ENCODE measurements at regions of chr7 and their contacts with region 1.

Region 1: DNA sequence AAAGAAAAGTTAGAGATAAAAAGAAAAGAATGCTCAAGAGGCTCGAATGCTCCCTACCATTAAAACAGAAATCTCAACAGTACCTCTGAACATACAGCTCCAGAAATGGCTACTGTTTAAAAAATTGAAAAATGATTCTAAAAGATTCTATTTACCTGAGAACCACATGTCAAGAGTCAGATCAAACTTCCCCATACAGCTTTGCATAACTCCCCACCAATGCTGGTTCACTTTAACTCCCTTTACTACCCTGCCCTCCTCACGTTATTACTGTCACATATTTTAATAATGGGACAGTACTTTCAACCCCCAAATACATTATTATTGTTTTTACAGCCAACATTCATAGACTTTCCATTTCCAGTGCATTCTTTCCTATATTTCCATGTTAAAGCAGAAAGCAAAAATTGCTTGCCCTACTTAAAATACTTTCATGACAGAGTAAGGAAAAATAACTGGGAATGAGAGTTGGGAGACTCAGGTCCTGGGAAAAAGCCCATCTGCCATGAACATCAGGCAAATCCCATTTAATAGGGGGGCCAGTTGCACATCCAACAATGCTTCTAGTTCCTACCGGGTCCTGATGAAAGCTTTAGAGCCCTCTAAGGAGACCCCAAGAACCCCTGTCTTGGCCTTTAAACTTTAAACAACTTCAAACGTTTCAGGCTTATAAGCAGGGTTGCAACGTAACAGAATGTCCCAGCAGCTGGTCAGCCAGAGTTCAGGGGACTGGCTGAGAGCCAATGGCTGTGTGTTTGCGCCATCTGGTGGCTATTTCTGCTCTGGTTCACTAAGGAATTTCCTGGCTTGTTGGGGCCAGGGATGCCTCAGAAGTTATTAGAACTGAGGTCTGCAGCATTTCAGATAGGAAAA is 247.4 kb downstream of the ELMO1 start:
- DNase-seq: peak; percentile 49
- H3K4me3 ChIP-seq: no peak overlapping the region
- H3K27ac ChIP-seq: no peak overlapping the region
- H3K4me1 ChIP-seq: no peaks in the 10 kb centered on the region
- H3K27me3 ChIP-seq: no peaks in the 10 kb centered on the region
- CTCF ChIP-seq: peak; percentile 83

Region 2: DNA sequence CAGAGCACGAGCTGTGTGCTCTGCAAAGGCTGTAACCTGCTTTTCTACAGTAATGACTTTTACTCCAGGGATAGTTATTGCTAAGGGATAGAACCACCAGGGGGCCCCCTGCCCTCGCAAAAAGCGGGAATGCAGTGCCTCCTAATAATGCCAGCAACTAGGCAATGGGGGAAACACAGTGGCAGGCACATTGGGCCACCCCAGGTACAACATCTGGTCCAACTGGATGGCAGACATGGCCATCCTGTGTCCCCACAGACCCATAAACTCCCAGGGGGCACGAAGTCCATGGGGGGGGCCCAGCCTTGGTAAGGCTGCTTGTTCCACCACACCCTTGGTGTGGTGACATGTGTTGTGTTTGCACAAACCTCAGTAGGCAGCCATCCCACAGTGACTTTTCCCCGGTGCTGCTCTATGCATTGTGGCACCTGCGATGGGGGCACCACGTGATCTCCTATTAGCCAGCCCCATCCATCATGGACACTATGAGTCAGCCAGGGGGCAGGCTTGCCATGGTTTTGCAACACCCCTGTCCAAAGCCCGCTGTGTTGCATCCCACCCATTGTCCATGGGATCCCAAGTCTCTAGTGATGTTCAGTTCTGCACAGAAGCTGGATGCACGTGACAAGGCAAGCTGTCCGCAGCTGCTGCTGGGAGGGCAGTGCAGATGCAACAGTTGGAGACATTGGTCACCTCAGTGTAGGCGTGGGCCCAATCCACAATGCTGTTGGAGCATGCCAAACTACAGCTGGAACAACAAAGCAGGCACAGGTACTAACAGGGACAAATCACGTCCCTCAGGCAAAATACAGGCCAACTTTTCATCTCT is 727.6 kb before region 1 on chr7:
- CTCF ChIA-PET with region 1: interaction called, 3 read pairs
- POLR2A ChIA-PET with region 1: no interaction called
- intact Hi-C with region 1: loop called (anchors 2 kb)
- DNase-seq: peak; percentile 57
- H3K4me3 ChIP-seq: no peak overlapping the region
- H3K27ac ChIP-seq: no peak overlapping the region
- H3K4me1 ChIP-seq: no peaks in the 10 kb centered on the region
- H3K27me3 ChIP-seq: no peaks in the 10 kb centered on the region
- CTCF ChIP-seq: peak; percentile 78

Region 3: GRCh38 chr7:36670585-36671431 is 530.4 kb before region 1 on chr7:
- CTCF ChIA-PET with region 1: no interaction called
- POLR2A ChIA-PET with region 1: no interaction called
- intact Hi-C with region 1: loop called (anchors 5 kb)
- DNase-seq: peak; percentile 68
- H3K4me3 ChIP-seq: no peak overlapping the region
- H3K27ac ChIP-seq: no peak overlapping the region
- H3K4me1 ChIP-seq: no peaks in the 10 kb centered on the region
- H3K27me3 ChIP-seq: peaks cover 6% of the 10 kb centered on the region
- CTCF ChIP-seq: peak; percentile 87

Region 4: GRCh38 chr7:36967387-36967786 is 233.9 kb before region 1 on chr7:
- CTCF ChIA-PET with region 1: interaction called, 13 read pairs
- POLR2A ChIA-PET with region 1: no interaction called
- intact Hi-C with region 1: loop called (anchors 5 kb)
- DNase-seq: peak; percentile 48
- H3K4me3 ChIP-seq: no peak overlapping the region
- H3K27ac ChIP-seq: no peak overlapping the region
- H3K4me1 ChIP-seq: no peaks in the 10 kb centered on the region
- H3K27me3 ChIP-seq: no peaks in the 10 kb centered on the region
- CTCF ChIP-seq: peak; percentile 75

Region 5: GRCh38 chr7:37181550-37181932 is 19.7 kb before region 1 on chr7:
- CTCF ChIA-PET with region 1: interaction called, 10 read pairs
- POLR2A ChIA-PET with region 1: no interaction called
- intact Hi-C with region 1: no loop called
- DNase-seq: no peak
- H3K4me3 ChIP-seq: no peak overlapping the region
- H3K27ac ChIP-seq: no peak overlapping the region
- H3K4me1 ChIP-seq: no peaks in the 10 kb centered on the region
- H3K27me3 ChIP-seq: peaks cover 8% of the 10 kb centered on the region
- CTCF ChIP-seq: no peak

Region 6: GRCh38 chr7:37534893-37535610 is 333.8 kb after region 1 on chr7:
- CTCF ChIA-PET with region 1: no interaction called
- POLR2A ChIA-PET with region 1: no interaction called
- intact Hi-C with region 1: no loop called
- DNase-seq: no peak
- H3K4me3 ChIP-seq: no peak overlapping the region
- H3K27ac ChIP-seq: no peak overlapping the region
- H3K4me1 ChIP-seq: no peaks in the 10 kb centered on the region
- H3K27me3 ChIP-seq: no peaks in the 10 kb centered on the region
- CTCF ChIP-seq: no peak